Panc1 (cell line): ENCODE measurements at regions of chrX and their contacts with region 1.

Region 1: DNA sequence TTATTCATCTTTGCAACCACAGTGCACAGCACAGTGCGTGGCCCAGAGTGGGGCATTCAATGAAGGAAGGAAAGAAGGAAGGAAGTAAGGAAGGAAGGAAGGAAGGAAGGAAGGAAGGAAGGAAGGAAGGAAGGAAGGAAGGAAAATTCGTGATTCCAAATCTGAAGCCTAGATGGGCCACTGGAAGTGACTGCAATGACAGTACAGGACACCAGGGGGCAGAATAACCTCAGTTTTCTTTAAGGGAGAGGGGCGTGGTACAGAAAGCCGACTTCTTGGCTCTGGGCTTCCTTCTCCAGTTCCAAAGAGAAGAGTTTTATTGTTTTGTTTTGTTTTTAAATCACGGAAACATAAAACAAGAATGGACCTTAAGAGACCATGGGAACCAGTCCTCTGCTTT is 47.8 kb downstream of the APLN start:
- DNase-seq: peak; percentile 41
- ATAC-seq: peak; percentile 72
- H3K4me3 ChIP-seq: no peak overlapping the region; a peak in 1 of 4 replicates
- H3K27ac ChIP-seq: no peak overlapping the region
- H3K4me1 ChIP-seq: 0 out of 2 replicates have a peak, but pooled peaks cover 4% of the 10 kb centered on the region
- H3K27me3 ChIP-seq: no peaks in the 10 kb centered on the region
- CTCF ChIP-seq: peak; percentile 76

Region 2: GRCh38 chrX:129540068-129540653 is 66.8 kb before region 1 on chrX and contains the start of gene OCRL:
- CTCF ChIA-PET with region 1: no interaction called
- POLR2A ChIA-PET with region 1: no interaction called
- in situ Hi-C with region 1: no loop called
- intact Hi-C with region 1: no loop called
- DNase-seq: peak; percentile 38
- ATAC-seq: peak; percentile 98
- H3K4me3 ChIP-seq: peak within 1 kb of the TSS; percentile 71 to 84
- H3K27ac ChIP-seq: peak within 1 kb of the TSS; percentile 85
- H3K4me1 ChIP-seq: peaks cover 15% of the 10 kb centered on the region
- H3K27me3 ChIP-seq: no peaks in the 10 kb centered on the region
- CTCF ChIP-seq: peak; percentile 89
- total RNA-seq, gene OCRL: 53.7 TPM

Region 3: GRCh38 chrX:129553619-129554288 is 53.2 kb before region 1 on chrX:
- CTCF ChIA-PET with region 1: no interaction called
- POLR2A ChIA-PET with region 1: no interaction called
- in situ Hi-C with region 1: no loop called
- intact Hi-C with region 1: no loop called
- DNase-seq: no peak
- ATAC-seq: no peak
- H3K4me3 ChIP-seq: no peak overlapping the region
- H3K27ac ChIP-seq: no peak overlapping the region
- H3K4me1 ChIP-seq: no peaks in the 10 kb centered on the region
- H3K27me3 ChIP-seq: no peaks in the 10 kb centered on the region
- CTCF ChIP-seq: no peak

Region 4: DNA sequence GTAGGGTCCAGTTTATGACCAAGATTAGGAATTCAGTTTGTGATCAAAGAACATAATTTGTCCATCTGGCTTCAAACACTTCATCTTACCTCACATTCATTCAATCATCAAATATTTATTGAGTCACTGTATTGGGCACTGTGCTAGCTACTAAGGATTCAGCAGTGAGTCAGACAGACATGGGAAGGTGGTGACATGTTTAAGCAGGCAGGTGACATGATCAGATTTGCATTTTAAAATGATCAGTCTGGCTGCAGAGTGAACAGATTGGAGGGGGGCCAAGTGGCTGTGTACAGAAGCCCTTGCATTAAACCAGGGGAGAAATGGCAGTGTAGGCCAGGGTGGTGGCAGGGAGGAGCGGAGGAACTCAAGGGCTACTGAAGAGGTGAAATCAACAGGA is 73.0 kb after region 1 on chrX:
- CTCF ChIA-PET with region 1: interaction called, 5 read pairs
- POLR2A ChIA-PET with region 1: interaction called, 16 read pairs
- in situ Hi-C with region 1: no loop called
- intact Hi-C with region 1: no loop called
- DNase-seq: no peak
- ATAC-seq: no peak
- H3K4me3 ChIP-seq: no peak overlapping the region
- H3K27ac ChIP-seq: no peak overlapping the region
- H3K4me1 ChIP-seq: peaks cover 13% of the 10 kb centered on the region
- H3K27me3 ChIP-seq: no peaks in the 10 kb centered on the region
- CTCF ChIP-seq: no peak

Region 5: GRCh38 chrX:129726307-129727111 is 119.6 kb after region 1 on chrX:
- CTCF ChIA-PET with region 1: interaction called, 10 read pairs
- POLR2A ChIA-PET with region 1: no interaction called
- in situ Hi-C with region 1: no loop called
- intact Hi-C with region 1: loop called (anchors 2 kb)
- DNase-seq: peak; percentile 63
- ATAC-seq: peak; percentile 93
- H3K4me3 ChIP-seq: no peak overlapping the region
- H3K27ac ChIP-seq: no peak overlapping the region
- H3K4me1 ChIP-seq: no peaks in the 10 kb centered on the region
- H3K27me3 ChIP-seq: no peaks in the 10 kb centered on the region
- CTCF ChIP-seq: peak; percentile 82

Region 6: GRCh38 chrX:129823115-129823514 is 216.2 kb after region 1 on chrX:
- CTCF ChIA-PET with region 1: interaction called, 5 read pairs
- POLR2A ChIA-PET with region 1: no interaction called
- in situ Hi-C with region 1: no loop called
- intact Hi-C with region 1: loop called (anchors 2 kb)
- DNase-seq: no peak
- ATAC-seq: peak; percentile 94
- H3K4me3 ChIP-seq: no peak overlapping the region
- H3K27ac ChIP-seq: no peak overlapping the region
- H3K4me1 ChIP-seq: no peaks in the 10 kb centered on the region
- H3K27me3 ChIP-seq: no peaks in the 10 kb centered on the region
- CTCF ChIP-seq: peak; percentile 74

Region 7: DNA sequence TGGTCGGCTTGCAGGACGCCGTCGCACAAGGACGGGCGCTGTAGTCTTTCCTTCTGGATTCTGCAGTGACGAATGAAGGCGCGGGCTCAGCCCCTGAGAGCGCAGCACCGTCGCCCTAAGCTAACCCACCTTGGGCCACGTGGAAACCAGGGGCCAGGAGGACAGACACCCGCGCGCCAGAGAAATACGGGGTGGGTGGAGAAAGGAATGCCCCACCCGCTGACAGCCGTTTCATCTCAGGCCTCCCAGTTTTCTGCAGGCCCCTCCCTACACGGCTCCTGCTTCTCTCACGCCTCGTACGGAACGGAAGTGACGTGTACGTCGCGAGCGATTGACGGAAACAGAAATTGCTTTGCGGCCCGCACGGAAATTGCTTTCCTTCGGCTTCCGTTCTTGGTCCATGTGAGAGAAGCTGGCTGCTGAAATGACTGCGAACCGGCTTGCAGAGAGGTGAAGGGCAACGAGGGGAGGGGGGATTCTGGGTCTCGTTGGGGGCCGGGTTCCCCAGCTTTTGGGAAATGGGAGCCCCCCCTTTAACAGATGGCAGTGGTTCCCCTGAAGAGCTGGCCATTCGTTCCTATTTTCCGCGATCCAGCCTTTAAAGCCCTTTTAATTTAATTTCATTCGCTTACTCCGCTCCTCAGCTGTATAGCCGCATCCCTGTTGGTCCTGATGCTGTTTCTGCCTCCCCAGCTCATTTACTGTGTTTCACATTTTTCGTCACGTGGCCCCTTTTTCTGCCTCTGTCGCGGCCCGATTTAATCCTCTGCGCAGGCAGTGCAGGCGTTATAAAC is 299.1 kb after region 1 on chrX and contains the start of gene UTP14A:
- CTCF ChIA-PET with region 1: interaction called, 4 read pairs
- POLR2A ChIA-PET with region 1: no interaction called
- in situ Hi-C with region 1: no loop called
- intact Hi-C with region 1: loop called (anchors 10 kb)
- DNase-seq: peak; percentile 78
- ATAC-seq: peak; percentile 99
- H3K4me3 ChIP-seq: peak within 1 kb of the TSS; percentile 95 to 98
- H3K27ac ChIP-seq: peak within 1 kb of the TSS; percentile 96
- H3K4me1 ChIP-seq: peaks cover 14% of the 10 kb centered on the region
- H3K27me3 ChIP-seq: no peaks in the 10 kb centered on the region
- CTCF ChIP-seq: no peak
- total RNA-seq, gene UTP14A: 64.2 TPM

Region 8: GRCh38 chrX:130196466-130196865 is 589.5 kb after region 1 on chrX:
- CTCF ChIA-PET with region 1: no interaction called
- POLR2A ChIA-PET with region 1: no interaction called
- in situ Hi-C with region 1: no loop called
- intact Hi-C with region 1: loop called (anchors 10 kb)
- DNase-seq: no peak
- ATAC-seq: no peak
- H3K4me3 ChIP-seq: no peak overlapping the region
- H3K27ac ChIP-seq: no peak overlapping the region
- H3K4me1 ChIP-seq: peaks cover 6% of the 10 kb centered on the region; the same call in 1 of the 2 replicates
- H3K27me3 ChIP-seq: no peaks in the 10 kb centered on the region
- CTCF ChIP-seq: no peak